ENCODE measurements at regions of chr12 and their contacts with region 1.

Region 1: DNA sequence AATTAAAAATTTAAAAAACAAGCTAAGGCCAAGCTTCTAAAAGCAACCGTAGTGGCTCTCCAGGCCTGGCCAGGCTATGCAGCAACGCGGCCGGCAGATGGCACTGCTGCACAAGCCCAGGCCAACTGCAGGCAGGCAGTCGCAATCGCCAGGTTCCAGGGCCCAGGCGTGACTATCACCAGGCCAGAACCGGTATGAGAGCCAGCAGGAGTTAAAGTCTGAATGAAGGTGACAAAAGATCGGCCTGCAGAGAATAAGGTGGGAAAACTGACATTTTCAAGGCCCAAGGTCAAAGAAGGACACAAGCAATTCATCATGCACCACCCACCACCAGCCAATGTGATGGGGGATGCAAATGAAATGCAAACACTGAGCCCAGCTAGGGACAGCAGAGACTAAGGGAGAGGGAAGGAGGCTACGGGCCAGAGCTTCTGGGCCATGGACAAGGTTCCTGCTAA is 43.6 kb upstream of the ANO2 start:
- DNase-seq: peak; percentile 63 to 92 (median 81)

Region 2: DNA sequence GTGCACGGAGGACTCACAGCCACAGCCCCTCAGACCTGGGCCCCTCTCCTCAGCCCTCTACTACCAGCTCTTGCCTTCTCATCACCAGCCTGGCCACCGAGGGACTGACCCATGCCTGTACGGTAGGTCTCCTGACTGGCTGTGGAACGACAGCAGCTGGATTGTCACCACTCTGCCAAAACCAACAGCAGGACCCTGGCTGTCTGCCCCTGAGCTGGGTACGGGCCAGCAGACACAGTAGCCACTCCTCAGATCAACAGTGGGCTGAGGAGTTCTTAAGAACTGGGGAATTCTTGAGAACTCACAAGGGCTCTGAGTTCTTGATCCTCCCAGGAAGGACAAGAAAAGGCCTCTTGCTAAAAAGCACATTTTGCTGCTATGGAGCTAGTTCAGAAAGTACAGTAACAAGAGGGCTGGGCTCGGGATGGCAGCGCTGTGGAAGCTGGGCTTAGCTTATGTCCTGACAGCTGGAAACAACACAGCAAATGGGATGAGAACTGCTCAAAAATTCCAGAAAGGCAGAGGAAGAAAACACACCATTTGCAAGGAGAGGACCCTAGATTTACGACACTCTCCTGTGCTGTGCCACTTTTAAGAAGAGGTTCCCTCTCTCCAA is 220.0 kb before region 1 on chr12:
- intact Hi-C with region 1: no loop called
- DNase-seq: no peak

Region 3: GRCh38 chr12:6036509-6036908 is 47.8 kb after region 1 on chr12:
- intact Hi-C with region 1: loop called (anchors 2 kb)
- DNase-seq: no peak